Caco-2 (cell line): ENCODE measurements at regions of chr5 and their contacts with region 1.

Region 1: DNA sequence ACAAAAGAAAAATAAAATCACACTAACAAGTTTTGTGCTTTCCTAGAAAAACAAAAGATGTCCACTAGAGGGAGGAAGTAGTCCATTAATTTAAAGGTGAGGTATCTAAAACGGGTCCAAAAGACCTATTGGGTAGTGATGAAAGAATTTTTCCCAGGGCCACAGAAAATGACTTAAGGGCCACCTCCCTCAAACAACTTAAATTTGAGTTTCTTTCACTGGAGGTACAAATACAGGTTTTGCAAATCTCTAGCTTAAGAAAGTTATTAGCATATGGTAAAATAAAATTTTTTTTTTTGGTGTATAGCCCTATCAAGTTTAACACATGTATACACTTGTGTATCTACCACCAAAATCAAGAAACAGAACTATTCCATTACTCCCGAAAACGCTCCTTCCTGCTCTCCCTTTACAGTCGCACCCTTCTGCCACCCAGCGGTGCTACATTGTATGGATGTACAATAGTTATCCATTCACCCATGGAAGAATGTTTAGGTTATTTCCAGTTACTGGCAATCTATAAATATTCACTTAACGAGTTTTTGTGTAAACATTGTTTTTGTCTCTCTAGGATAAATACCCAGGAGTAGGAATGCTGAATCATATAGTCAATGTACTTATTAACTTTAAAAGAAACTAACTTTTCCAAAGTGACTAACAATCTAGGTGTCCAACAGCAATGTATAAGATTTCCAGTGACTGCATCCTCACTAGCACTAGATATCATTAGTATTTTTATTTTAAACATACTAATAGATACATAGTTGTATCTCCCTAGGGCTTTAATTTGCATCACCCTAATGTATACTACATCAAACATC is 21.9 kb downstream of the DEPDC1B start:
- DNase-seq: peak; percentile 50 to 64
- H3K4me3 ChIP-seq: no peak overlapping the region
- H3K4me3 Mint-ChIP-seq: peak overlapping the region; percentile 56
- H3K27ac Mint-ChIP-seq: peak overlapping the region; percentile 31
- H3K4me1 ChIP-seq: peaks cover 50% of the 10 kb centered on the region
- H3K4me1 Mint-ChIP-seq: peaks cover 65% of the 10 kb centered on the region
- H3K27me3 ChIP-seq: no peaks in the 10 kb centered on the region
- H3K27me3 Mint-ChIP-seq: no peaks in the 10 kb centered on the region
- CTCF ChIP-seq: peak; percentile 36 to 67

Region 2: DNA sequence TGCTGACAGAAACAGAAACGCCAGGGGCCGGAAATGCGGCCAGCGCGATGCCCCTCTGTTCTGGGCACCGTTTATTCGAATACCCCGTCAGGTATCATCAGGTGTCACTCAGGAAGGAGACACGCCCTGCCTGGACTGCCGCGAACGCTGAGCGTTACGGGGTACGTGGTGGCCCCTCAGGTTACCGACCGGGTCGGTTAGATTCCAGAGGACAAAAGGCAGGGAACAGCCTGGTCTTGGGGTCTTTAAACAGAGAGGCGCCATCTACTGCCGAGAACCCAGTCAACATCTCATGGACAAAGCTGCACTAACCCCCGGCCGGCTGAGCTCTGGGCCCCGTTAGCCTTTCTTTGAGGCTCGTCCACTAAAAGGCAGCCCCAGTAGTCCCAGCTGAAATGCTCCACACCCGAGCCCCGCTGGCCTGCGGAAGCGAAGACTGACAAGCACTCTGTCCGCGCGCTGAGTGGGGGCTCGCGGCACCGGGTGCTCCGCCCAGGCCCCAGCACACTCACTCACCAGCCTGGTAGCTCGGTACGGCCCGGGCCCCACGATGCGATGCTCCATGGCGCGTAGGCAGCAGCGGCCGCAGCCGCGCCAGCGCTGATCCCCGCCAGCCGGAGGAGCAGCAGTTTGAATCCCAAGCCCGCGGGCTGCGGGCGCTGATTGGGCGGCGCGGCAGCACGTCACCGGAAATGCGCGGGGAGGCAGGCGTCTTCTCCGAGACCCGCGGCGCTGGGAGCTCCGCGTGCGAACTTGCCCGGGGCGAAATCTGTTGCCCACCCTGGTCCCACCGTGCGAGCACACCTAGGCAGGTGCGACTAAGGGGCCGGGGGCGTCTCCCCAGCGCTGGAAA is 21.7 kb after region 1 on chr5 and contains the start of gene DEPDC1B:
- CTCF ChIA-PET with region 1: interaction called, 25 read pairs
- POLR2A ChIA-PET with region 1: interaction called, 16 read pairs
- intact Hi-C with region 1: loop called (anchors 1 kb)
- DNase-seq: peak; percentile 94 to 95
- H3K4me3 ChIP-seq: peak within 1 kb of the TSS; percentile 72
- H3K4me3 Mint-ChIP-seq: peak within 1 kb of the TSS; percentile 74
- H3K27ac Mint-ChIP-seq: peak within 1 kb of the TSS; percentile 90
- H3K4me1 ChIP-seq: peaks cover 13% of the 10 kb centered on the region
- H3K4me1 Mint-ChIP-seq: peaks cover 10% of the 10 kb centered on the region
- H3K27me3 ChIP-seq: no peaks in the 10 kb centered on the region
- H3K27me3 Mint-ChIP-seq: no peaks in the 10 kb centered on the region
- CTCF ChIP-seq: peak; percentile 25 to 57
- total RNA-seq, gene DEPDC1B: 44.9 and 46.7 TPM in 2 replicates

Region 3: DNA sequence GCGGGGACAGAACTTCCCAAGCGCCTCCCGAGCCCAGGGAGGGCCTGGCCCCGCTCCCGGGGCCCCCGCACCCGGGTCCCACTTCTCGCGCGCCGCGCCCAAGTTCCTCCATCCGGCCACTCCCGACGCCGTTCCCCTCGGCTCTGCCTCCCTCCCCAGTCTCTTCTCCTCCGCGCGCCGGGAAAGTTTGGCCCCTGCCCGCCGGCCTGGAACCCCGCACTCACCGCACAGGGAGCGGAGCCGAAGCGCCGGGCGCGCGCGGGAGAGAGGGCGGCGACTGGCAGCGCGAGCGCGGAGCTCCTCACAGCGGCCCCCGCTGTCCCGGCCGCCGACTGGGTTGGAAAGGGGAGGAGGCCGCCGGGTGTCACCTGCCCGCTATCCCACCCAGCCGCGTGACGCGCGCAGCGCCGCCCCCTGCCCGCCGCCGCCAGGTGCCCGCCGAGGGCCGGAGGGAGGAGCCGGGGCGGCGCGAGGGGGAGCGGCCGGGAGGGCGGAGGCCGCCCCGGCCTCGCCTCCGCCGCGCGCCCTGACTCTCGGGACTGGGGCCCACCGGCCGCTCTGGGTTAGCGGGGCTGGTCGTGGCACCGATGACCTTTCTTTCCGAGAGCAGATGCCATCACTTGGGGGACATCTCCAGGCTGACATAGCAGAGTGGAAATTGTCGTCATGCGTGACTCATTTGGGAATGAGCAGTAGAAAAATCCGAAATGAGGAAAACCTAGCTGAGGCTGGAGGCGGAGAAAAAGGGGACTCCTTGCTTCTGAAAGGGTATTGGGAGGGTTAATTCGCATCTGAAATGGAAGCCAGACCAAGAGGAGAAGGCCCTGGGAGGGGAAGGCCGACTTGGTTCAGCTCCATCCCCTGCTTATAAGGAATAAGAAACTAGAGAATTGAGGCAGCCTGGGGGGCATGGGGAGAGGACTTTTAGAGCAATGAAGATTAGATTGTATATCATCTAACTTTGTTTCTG is 166.2 kb after region 1 on chr5 and contains the start of gene ELOVL7:
- CTCF ChIA-PET with region 1: interaction called, 4 read pairs
- POLR2A ChIA-PET with region 1: no interaction called
- intact Hi-C with region 1: loop called (anchors 1 kb)
- DNase-seq: peak; percentile 92 to 96
- H3K4me3 ChIP-seq: peak within 1 kb of the TSS; percentile 97
- H3K4me3 Mint-ChIP-seq: peak within 1 kb of the TSS; percentile 96
- H3K27ac Mint-ChIP-seq: peak within 1 kb of the TSS; percentile 86
- H3K4me1 ChIP-seq: peaks cover 4% of the 10 kb centered on the region; the same call in 1 of the 2 replicates
- H3K4me1 Mint-ChIP-seq: peaks cover 31% of the 10 kb centered on the region
- H3K27me3 ChIP-seq: 0 out of 2 replicates have a peak, but pooled peaks cover 2% of the 10 kb centered on the region
- H3K27me3 Mint-ChIP-seq: no peaks in the 10 kb centered on the region
- CTCF ChIP-seq: peak; percentile 36 to 56
- total RNA-seq, gene ELOVL7: 16.4 and 19.1 TPM in 2 replicates

Region 4: GRCh38 chr5:60929024-60929423 is 251.0 kb after region 1 on chr5:
- CTCF ChIA-PET with region 1: interaction called, 4 read pairs
- POLR2A ChIA-PET with region 1: no interaction called
- intact Hi-C with region 1: loop called (anchors 1 kb)
- DNase-seq: no peak
- H3K4me3 ChIP-seq: no peak overlapping the region
- H3K4me3 Mint-ChIP-seq: no peak overlapping the region
- H3K27ac Mint-ChIP-seq: no peak overlapping the region
- H3K4me1 ChIP-seq: no peaks in the 10 kb centered on the region
- H3K4me1 Mint-ChIP-seq: no peaks in the 10 kb centered on the region
- H3K27me3 ChIP-seq: no peaks in the 10 kb centered on the region
- H3K27me3 Mint-ChIP-seq: no peaks in the 10 kb centered on the region
- CTCF ChIP-seq: peak; percentile 20

Region 5: GRCh38 chr5:61301341-61302199 is 623.5 kb after region 1 on chr5:
- CTCF ChIA-PET with region 1: no interaction called
- POLR2A ChIA-PET with region 1: no interaction called
- intact Hi-C with region 1: loop called (anchors 10 kb)
- DNase-seq: peak; percentile 89 to 93
- H3K4me3 ChIP-seq: no peak overlapping the region
- H3K4me3 Mint-ChIP-seq: peak overlapping the region; percentile 52
- H3K27ac Mint-ChIP-seq: peak overlapping the region; percentile 86
- H3K4me1 ChIP-seq: peaks cover 52% of the 10 kb centered on the region
- H3K4me1 Mint-ChIP-seq: peaks cover 34% of the 10 kb centered on the region
- H3K27me3 ChIP-seq: no peaks in the 10 kb centered on the region
- H3K27me3 Mint-ChIP-seq: no peaks in the 10 kb centered on the region
- CTCF ChIP-seq: no peak